GM12878 (cell line): ENCODE measurements at regions of chr5 and their contacts with region 1.

Region 1: DNA sequence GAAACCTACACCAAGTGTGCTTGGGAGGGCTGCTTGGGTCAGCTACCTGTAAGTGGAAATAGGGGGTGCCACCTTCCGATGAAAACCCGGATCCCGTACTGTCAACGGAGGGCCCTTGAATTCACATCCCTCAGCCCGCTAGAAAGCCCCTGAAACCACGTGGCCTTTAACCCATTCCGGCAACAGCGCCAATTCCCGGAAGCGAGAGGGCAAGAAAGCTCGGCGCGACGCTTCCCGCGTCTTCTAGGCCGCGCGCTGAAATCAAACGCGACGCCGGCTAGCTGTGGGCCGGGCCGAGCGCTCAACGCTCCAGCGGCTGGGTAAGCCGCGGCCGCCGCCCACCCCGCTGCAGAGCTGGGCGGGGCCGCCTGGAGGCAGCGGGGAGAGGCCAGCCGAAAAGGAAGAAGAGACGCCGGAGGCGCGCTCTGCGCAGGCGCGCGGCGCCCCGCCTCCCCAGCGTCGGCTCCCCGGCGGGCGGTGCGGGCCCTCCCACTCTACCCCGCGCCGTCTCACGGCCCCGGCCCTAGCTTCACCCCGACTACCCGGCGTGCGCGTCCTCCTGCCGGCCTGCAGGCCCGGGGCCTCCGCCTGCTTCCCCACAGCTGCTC is at the start of gene KIF2A:
- DNase-seq: peak; percentile 78
- ATAC-seq: peak; percentile 92
- H3K4me3 ChIP-seq: peak within 1 kb of the TSS; percentile 93
- H3K27ac ChIP-seq: peak within 1 kb of the TSS; percentile 67
- H3K4me1 ChIP-seq: peaks cover 9% of the 10 kb centered on the region
- H3K27me3 ChIP-seq: no peaks in the 10 kb centered on the region
- CTCF ChIP-seq: 0 out of 6 replicates have a peak, but pooled peaks of 1 of the 3 experiments have one; percentile 10
- EP300 ChIP-seq: no peak
- POLR2A ChIP-seq: peak; percentile 91
- RAD21 ChIP-seq: no peak
- polyA plus RNA-seq, gene KIF2A: 35.9 to 36.9 TPM

Region 2: GRCh38 chr5:62284946-62285891 is 20.6 kb before region 1 on chr5:
- CTCF ChIA-PET with region 1: interaction called, 4 read pairs
- POLR2A ChIA-PET with region 1: interaction called, 11 read pairs
- RAD21 ChIA-PET with region 1: interaction called, 5 read pairs
- SMC1A ChIA-PET with region 1: interaction called, 3 read pairs
- in situ Hi-C with region 1: no loop called
- intact Hi-C with region 1: no loop called
- DNase-seq: peak; percentile 71
- ATAC-seq: peak; percentile 81
- H3K4me3 ChIP-seq: no peak overlapping the region
- H3K27ac ChIP-seq: peak overlapping the region; percentile 10
- H3K4me1 ChIP-seq: peaks cover 12% of the 10 kb centered on the region
- H3K27me3 ChIP-seq: no peaks in the 10 kb centered on the region
- CTCF ChIP-seq: no peak
- EP300 ChIP-seq: no peak; a peak in 1 of 4 replicates
- POLR2A ChIP-seq: no peak
- RAD21 ChIP-seq: no peak

Region 3: DNA sequence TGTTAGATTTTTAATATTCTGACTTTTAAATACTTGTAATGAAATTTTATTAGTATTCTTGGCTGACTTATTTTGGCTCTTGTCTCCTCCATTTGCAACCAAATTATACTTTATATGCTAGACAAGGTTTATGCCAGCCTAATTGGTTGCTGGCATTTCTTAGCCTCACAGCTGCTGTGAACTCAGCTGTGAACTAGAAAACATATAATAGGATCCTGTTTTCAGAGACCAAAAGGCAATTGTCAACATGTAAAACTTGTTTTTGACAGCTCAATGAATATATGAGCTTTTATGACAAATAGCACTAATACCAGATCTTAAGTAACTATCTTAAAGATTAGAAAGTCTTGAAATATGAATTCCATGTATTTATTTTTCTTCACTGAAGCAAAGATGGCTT is 26.1 kb after region 1 on chr5:
- CTCF ChIA-PET with region 1: interaction called, 10 read pairs
- POLR2A ChIA-PET with region 1: interaction called, 4 read pairs
- RAD21 ChIA-PET with region 1: interaction called, 10 read pairs
- SMC1A ChIA-PET with region 1: interaction called, 16 read pairs
- in situ Hi-C with region 1: no loop called
- intact Hi-C with region 1: no loop called
- DNase-seq: no peak
- ATAC-seq: no peak
- H3K4me3 ChIP-seq: no peak overlapping the region
- H3K27ac ChIP-seq: no peak overlapping the region
- H3K4me1 ChIP-seq: peaks cover 2% of the 10 kb centered on the region; the same call in 1 of the 2 replicates
- H3K27me3 ChIP-seq: no peaks in the 10 kb centered on the region
- CTCF ChIP-seq: no peak
- EP300 ChIP-seq: no peak
- POLR2A ChIP-seq: no peak
- RAD21 ChIP-seq: no peak

Region 4: DNA sequence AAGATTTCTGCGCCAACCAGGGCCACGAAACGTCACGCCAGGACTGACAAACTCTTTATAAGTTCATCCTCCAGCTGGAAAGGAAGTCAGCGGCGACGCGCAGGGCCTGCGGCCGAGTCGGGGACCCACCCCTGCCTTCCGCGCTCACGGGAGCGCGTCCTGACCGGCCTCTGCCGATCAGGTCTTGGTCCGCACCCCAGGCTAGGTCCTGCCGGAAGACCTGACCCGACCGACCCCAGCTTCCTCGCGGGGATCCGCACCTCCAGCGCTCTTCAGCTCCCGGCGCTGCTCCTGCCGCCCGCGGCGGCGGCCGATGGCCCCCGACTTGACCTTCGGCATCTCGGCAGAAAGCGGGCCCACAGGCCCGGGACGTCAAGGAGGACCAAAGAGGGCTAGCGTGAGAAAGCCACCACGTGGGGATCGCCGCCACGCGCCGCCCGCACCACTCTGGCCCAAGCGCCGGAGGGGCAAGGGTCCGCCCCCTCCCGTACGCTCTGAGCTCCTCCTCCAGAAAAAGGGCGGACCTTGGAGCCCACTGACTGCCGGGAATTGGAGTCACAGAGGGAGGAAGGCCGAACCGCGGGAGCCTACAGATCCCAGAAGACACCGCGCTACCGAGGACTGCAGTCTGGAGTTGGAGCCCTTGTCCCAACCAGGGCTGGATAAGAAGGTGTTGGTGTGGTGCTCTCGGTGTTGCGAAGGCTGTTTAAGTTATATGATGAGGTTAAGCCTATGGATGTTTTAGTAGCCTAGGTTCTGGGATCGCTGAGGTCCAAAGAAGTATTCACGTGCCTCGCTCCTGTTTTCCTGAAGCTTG is 97.8 kb after region 1 on chr5 and contains the start of gene DIMT1:
- CTCF ChIA-PET with region 1: interaction called, 3 read pairs
- POLR2A ChIA-PET with region 1: interaction called, 11 read pairs
- RAD21 ChIA-PET with region 1: interaction called, 7 read pairs
- SMC1A ChIA-PET with region 1: interaction called, 13 read pairs
- in situ Hi-C with region 1: no loop called
- intact Hi-C with region 1: loop called (anchors 5 kb)
- DNase-seq: peak; percentile 86
- ATAC-seq: peak; percentile 98
- H3K4me3 ChIP-seq: peak within 1 kb of the TSS; percentile 87
- H3K27ac ChIP-seq: peak within 1 kb of the TSS; percentile 94
- H3K4me1 ChIP-seq: 0 out of 2 replicates have a peak, but pooled peaks cover 6% of the 10 kb centered on the region
- H3K27me3 ChIP-seq: no peaks in the 10 kb centered on the region
- CTCF ChIP-seq: no peak
- EP300 ChIP-seq: no peak
- POLR2A ChIP-seq: peak; percentile 95
- RAD21 ChIP-seq: no peak
- polyA plus RNA-seq, gene DIMT1: 19.0 to 26.4 TPM